Gastrocnemius medialis (tissue), 4 donors: ENCODE measurements at regions of chr5 and their contacts with region 1.

Region 1: GRCh38 chr5:134465816-134466240 is 54.1 kb upstream of the CDKN2AIPNL start:
- DNase-seq: peak; percentile 82 to 93
- ATAC-seq: peak; percentile 68
- H3K4me3 ChIP-seq: peak overlapping the region; percentile 59 to 72 (median 62)
- H3K27ac ChIP-seq: peak overlapping the region; percentile 93 to 99 (median 98)
- H3K4me1 ChIP-seq: peaks cover 26 to 43% of the 10 kb centered on the region in 2 donors
- H3K27me3 ChIP-seq: no peaks in the 10 kb centered on the region
- CTCF ChIP-seq: peak in 3 of 5 experiments; percentile 15 to 27 (median 20)
- POLR2A ChIP-seq: peak; percentile 88 to 92

Region 2: GRCh38 chr5:134503088-134503946 is 37.5 kb after region 1 on chr5:
- in situ Hi-C with region 1: no loop called
- intact Hi-C with region 1: loop called (anchors 2 kb)
- DNase-seq: peak; percentile 37 to 70
- ATAC-seq: peak; percentile 31 to 52
- H3K4me3 ChIP-seq: no peak overlapping the region
- H3K27ac ChIP-seq: peak overlapping the region; percentile 70 to 77 (median 74)
- H3K4me1 ChIP-seq: peaks cover 28 to 43% of the 10 kb centered on the region in 2 donors
- H3K27me3 ChIP-seq: no peaks in the 10 kb centered on the region
- CTCF ChIP-seq: no peak
- POLR2A ChIP-seq: peak in 1 of 2 donors; percentile 15

Region 3: GRCh38 chr5:134511788-134512650 is 46.2 kb after region 1 on chr5:
- in situ Hi-C with region 1: loop called in 2 of 4 experiments (anchors 10 kb)
- intact Hi-C with region 1: loop called (anchors 1 kb)
- DNase-seq: peak; percentile 85 to 96
- ATAC-seq: peak; percentile 84 to 88
- H3K4me3 ChIP-seq: no peak overlapping the region
- H3K27ac ChIP-seq: peak overlapping the region; percentile 79 to 93 (median 85)
- H3K4me1 ChIP-seq: peaks cover 20 to 33% of the 10 kb centered on the region in 2 donors
- H3K27me3 ChIP-seq: no peaks in the 10 kb centered on the region
- CTCF ChIP-seq: peak; percentile 50 to 68 (median 62)
- POLR2A ChIP-seq: peak; percentile 22 to 33